ENCODE measurements at regions of chr5 and their contacts with region 1.

Region 1: GRCh38 chr5:138503487-138504270 is 38.4 kb downstream of the EGR1 start:
- DNase-seq: no peak
- ATAC-seq: peak; percentile 85

Region 2: GRCh38 chr5:138369706-138370105 is 134.0 kb before region 1 on chr5:
- intact Hi-C with region 1: no loop called
- DNase-seq: no peak
- ATAC-seq: peak; percentile 51

Region 3: DNA sequence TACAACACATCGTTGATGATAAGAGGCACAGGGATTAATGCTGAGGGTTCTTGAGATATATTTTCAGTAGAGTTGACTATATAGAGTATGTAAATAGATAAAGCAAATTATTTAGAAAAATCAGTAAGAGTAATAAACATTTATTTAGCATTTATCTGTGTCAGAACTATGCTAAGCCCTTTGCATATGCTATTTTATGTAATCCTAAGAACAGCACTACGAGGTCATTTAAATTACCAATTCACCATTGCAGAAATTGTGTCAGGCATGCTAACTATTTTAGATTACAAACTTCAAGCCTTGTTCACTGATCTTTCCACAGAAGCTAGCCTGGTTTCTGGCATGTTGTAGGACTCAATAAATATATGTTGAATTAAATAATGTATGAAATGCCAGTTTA is 85.2 kb before region 1 on chr5:
- intact Hi-C with region 1: no loop called
- DNase-seq: no peak
- ATAC-seq: no peak

Region 4: DNA sequence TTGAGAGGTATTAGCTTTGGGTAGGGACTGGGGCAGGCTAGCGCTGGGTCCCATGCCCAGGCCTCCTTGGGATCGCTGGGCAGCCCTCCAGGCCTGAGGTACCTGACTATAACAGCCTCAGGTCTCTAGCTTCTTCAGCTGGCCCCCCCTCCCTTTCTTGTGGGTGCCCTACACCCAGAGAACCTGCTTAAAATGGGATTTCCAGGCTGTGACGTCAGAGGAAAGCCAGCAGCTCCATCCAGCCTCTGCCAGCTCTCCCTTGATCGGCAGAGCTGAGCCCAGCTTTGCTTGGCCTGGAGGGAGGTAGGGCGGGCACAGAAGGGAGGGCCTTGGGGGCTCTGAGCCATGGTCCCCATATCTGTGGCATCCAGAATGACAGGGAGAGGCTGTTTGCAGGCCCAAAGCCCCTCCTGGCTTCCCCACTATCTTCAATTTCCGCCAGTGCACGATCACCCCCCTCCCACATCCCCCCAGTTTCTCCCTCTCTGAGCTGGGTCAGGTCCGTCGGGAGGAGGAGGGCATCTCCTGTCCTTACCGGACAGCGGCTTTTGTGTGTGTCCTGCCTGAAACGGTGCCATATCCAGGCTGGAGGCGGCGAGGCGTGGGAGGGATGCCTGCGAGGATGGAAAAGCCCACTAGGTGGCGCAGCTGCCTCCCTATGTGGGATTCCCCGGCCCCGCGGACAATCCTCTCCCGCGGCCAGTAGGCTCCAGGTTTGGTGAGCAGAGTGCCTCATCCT is 54.0 kb before region 1 on chr5:
- intact Hi-C with region 1: loop called (anchors 5 kb)
- DNase-seq: peak; percentile 95
- ATAC-seq: peak; percentile 98

Region 5: DNA sequence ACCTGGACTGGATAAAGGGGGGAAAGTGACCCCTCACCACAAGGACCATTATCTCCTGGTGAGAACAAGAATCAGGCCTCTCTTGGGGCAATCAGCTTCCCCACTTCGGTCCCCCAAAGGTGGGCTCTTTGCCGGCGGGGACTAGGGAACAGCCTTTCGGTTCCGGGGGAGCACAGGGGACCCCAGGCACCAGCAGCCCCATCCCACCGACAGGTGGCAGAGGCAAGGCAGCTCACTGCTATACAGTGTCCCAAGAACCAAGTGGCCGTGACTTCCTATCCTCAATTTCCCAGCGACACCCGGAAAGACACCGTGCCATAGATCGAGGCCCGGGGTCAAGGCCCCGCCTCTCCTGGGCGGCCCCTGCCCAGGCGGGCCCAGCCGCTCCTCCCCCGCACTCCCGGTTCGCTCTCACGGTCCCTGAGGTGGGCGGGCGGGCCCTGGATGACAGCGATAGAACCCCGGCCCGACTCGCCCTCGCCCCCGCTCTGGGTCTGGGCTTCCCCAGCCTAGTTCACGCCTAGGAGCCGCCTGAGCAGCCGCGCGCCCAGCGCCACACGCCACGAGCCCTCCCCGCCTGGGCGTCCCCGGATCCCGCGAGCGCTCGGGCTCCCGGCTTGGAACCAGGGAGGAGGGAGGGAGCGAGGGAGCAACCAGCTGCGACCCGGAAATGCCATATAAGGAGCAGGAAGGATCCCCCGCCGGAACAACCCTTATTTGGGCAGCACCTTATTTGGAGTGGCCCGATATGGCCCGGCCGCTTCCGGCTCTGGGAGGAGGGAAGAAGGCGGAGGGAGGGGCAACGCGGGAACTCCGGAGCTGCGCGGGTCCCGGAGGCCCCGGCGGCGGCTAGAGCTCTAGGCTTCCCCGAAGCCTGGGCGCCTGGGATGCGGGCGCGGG is 39.0 kb before region 1 on chr5:
- intact Hi-C with region 1: loop called (anchors 5 kb)
- DNase-seq: peak; percentile 96
- ATAC-seq: peak; percentile 93

Region 6: DNA sequence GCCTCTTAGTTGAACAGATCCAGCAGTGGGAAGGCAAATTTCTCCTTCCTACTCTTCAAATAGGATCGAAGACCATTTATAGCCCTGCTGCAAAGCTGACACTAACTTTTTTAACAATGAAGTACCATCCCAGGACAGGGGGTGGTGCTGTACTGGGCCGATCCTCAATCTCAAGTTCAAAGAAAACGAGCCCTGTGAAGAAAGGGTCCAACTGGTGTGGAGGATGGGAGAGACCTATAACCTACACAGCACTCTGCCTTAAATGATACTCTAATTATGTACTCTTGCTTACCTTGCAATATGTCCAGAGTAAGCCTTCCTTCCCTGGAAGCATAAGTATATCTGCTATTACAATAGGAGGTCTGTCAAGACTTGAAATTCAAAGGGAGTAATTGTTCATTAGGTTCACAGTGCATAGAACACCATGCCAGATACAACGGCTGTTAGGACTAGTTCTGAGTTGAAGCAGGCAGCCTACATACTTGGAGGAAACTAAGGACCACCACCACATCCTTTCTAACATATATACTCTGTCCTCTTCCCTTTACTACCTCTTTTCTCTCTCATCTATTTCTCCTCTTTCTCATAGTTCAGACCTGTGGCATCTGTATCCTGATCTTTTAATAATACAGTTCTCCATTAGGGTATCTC is 33.1 kb after region 1 on chr5:
- intact Hi-C with region 1: loop called (anchors 5 kb)
- DNase-seq: no peak
- ATAC-seq: peak; percentile 16

Region 7: DNA sequence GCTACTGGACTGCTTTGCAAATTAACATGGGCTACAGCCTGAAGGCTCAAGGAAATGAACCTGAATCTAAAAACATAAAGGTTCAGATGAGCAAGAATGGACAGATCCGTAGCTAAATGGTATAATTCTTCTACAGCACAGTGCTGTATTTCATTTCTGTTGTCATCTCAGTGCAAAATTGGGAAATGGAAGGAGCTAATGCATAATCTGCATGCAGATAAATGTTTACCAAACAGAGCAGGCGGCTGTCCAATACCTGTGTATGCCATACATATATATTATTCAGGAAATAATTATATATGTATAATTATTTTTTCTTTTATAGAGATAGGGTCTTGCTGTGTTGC is 75.8 kb after region 1 on chr5:
- intact Hi-C with region 1: no loop called
- DNase-seq: no peak
- ATAC-seq: no peak

Measured in Right ventricle myocardium superior (tissue), 1 donor.